Naive thymus-derived CD4-positive, alpha-beta T cell (primary cell): ENCODE measurements at regions of chr19 and their contacts with region 1.

Region 1: DNA sequence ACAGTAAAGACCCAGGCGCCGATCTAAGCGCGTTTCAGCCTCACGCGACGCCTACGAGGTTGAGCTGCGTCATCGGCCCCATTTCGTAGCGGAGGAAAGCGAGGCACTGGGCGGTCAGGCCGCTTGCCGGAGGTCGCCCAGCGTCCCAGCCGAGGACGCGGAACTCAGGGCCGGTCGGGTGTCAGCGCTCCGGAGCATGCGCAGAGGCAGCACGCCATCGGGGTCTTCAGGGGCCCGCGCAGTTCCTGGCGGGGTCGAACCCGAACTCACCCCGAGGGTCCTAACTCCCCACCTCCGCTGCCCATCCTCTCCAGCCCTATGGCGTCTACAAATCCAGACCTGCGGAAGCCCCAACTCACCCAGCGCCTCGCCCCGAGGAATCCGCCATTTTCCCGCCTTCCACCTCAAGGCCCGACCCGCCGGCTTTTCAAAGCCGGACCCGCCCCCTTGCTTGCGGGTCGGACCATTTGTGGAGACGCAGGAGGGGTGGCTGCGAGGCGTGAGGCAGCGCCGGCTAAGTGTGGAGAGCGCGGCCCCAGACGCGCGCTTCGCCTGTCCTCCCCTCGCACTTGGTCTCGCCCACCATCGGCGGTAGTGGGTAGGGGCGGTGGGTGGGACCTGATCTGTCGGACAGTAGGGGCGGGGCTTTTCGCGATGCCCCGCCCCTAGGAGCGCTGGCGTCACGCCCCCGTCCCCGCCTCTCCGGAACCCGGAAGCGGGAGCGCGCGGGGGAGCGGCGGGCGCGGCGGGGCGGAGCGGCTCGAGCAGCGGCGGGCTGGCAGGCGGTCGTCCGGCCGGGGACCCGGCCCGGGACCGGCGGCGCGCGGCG is at the starts of genes HAUS8 and MYO9B:
- DNase-seq: peak; percentile 96 to 100 (median 100)
- ATAC-seq: peak; percentile 98
- H3K4me3 ChIP-seq: peak within 1 kb of the TSS; percentile 94
- H3K4me3 Mint-ChIP-seq: peak within 1 kb of the TSS; percentile 96 to 100 (median 98)
- H3K27ac ChIP-seq: peak within 1 kb of the TSS; percentile 88
- H3K27ac Mint-ChIP-seq: peak within 1 kb of the TSS; percentile 86 to 99 (median 97)
- H3K4me1 ChIP-seq: peaks cover 28 to 32% of the 10 kb centered on the region in 2 donors
- H3K4me1 Mint-ChIP-seq: peaks cover 45 to 65% (median 55%) of the 10 kb centered on the region in 7 donors
- H3K27me3 ChIP-seq: no peaks in the 10 kb centered on the region
- H3K27me3 Mint-ChIP-seq: no peaks in the 10 kb centered on the region
- total RNA-seq, gene HAUS8: 16.7 to 31.5 (median 19.3) TPM
- total RNA-seq, gene MYO9B: 154 to 297 (median 205) TPM

Region 2: DNA sequence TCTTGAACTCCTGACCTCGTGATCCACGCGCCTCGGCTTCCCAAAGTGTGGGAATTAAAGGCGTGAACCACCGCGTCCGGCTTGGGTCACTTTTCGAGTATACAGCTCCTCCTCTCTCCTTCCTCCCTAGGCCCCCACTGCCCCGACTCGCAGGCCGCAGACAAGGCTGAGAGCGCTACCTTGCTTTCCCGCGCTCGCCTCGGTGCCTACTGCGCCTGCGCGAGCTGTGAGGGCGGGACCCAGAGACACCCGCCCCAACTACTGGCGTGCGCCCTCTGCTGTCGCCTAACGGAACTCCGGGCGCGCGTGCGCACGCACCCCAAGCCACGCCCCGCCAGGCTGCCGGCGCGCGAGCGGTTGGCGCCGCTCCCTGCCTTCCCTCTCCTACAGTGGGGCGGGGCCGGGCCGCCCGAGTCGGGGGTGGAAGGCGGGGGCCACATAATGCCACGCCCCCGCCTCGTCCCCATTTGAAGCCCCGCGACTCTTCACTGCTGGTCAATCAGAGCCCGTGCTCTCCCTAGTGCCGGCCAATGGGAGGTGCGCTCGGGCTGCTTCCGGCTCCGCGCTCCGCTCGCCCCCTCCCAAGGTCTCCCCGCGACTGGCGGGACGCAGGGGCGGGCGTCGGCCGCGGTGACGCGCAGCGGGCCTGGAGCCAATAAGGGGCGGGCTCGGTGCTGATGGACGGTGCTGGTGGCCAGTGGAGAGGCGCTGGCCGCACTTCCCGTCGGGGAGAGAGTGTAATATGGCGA is 963.9 kb before region 1 on chr19 and contains the start of gene RAB8A:
- CTCF ChIA-PET with region 1: no interaction called
- POLR2A ChIA-PET with region 1: no interaction called
- intact Hi-C with region 1: loop called in 1 of 2 experiments (anchors 5 kb)
- DNase-seq: peak; percentile 98 to 100 (median 99)
- ATAC-seq: peak; percentile 93
- H3K4me3 ChIP-seq: peak within 1 kb of the TSS; percentile 90
- H3K4me3 Mint-ChIP-seq: peak within 1 kb of the TSS; percentile 93 to 99 (median 98)
- H3K27ac ChIP-seq: peak within 1 kb of the TSS; percentile 94
- H3K27ac Mint-ChIP-seq: peak within 1 kb of the TSS; percentile 89 to 99 (median 97)
- H3K4me1 ChIP-seq: peaks cover 10 to 19% of the 10 kb centered on the region in 2 donors
- H3K4me1 Mint-ChIP-seq: peaks cover 23 to 49% (median 40%) of the 10 kb centered on the region in 7 donors
- H3K27me3 ChIP-seq: no peaks in the 10 kb centered on the region
- H3K27me3 Mint-ChIP-seq: no peaks in the 10 kb centered on the region
- total RNA-seq, gene RAB8A: 64.4 to 154 (median 74.5) TPM

Region 3: DNA sequence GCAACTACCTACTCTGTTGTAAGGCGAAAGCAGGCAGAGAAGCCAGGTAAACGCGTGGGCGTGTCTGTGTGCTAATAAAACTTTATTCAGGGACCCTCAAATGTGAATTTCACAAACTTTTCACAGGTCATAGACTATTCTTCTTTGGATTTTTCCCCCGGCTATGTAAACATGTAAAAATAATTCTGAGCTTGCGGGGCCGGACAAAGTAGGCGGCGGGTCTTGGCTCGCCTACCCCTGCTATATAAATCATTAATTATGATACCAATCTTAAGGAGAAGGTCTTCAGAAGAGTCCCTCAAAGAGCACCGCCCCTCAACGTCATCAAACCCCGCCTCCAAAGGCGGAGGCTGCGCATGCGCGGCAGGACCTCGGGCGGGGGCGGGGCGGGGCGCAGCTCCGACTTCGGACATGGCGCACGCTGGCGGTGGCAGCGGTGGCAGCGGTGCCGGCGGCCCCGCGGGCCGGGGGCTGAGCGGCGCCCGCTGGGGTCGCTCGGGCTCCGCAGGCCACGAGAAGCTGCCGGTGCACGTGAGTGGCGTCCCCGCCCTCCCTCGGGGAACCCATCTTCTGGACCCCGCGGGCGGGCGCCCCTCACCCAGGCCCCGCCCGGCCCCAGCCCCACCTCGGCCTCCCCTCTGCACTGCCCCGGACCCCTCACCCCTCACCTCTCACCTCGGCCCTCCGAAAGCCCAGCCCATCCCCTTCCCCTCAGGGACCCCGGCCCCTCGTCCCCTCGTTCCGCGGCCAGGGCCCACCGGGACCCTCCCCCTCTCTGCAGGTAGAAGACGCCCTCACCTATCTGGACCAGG is 246.0 kb before region 1 on chr19 and contains the start of gene SIN3B:
- CTCF ChIA-PET with region 1: no interaction called
- POLR2A ChIA-PET with region 1: no interaction called
- intact Hi-C with region 1: loop called in 1 of 2 experiments (anchors 1 kb)
- DNase-seq: peak; percentile 84 to 94 (median 89)
- ATAC-seq: peak; percentile 97
- H3K4me3 ChIP-seq: peak within 1 kb of the TSS; percentile 67
- H3K4me3 Mint-ChIP-seq: peak within 1 kb of the TSS; percentile 77 to 90 (median 86)
- H3K27ac ChIP-seq: peak within 1 kb of the TSS; percentile 93
- H3K27ac Mint-ChIP-seq: peak within 1 kb of the TSS; percentile 56 to 95 (median 89)
- H3K4me1 ChIP-seq: peaks cover 8% of the 10 kb centered on the region in 2 donors
- H3K4me1 Mint-ChIP-seq: peaks cover 16 to 54% (median 42%) of the 10 kb centered on the region in 7 donors
- H3K27me3 ChIP-seq: no peaks in the 10 kb centered on the region
- H3K27me3 Mint-ChIP-seq: peaks cover 11 to 27% (median 21%) of the 10 kb centered on the region in 5 donors
- total RNA-seq, gene SIN3B: 42.7 to 105 (median 102) TPM

Region 4: DNA sequence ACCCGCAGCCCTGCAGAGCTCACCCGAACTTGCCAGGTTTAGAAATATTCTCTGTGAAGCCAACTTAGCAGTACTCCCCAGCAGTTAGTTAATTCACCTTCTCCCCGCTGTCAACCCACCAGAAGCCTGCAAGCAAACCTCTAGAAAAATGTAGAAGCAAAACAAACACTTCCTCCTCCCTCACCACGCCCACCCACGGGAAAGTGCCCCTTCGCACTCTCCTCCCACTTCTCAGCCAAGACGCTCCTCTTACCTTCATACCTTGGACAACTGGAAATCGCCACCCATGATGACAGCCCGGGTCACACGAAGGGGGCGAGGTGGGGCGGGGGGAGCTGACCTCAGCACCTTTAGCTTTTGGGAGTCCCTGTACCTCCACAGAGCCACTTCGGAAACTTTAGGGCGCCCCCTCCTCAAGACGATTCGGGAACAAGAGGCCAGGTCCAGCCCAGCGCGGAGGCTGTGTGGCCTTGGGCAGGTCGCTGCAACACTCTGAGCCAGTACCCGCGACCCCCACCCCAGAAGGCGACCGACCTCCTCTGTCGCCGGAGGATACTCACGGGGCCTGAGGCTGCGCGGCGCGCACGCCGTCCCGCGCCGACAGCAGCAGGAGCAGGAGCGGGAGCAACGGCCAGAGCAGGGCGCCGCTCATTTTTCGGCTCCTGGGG is 49.1 kb before region 1 on chr19:
- CTCF ChIA-PET with region 1: no interaction called
- POLR2A ChIA-PET with region 1: no interaction called
- intact Hi-C with region 1: no loop called
- DNase-seq: peak in 5 of 9 donors; percentile 10 to 24 (median 18)
- ATAC-seq: peak; percentile 48
- H3K4me3 ChIP-seq: peak overlapping the region; percentile 48
- H3K4me3 Mint-ChIP-seq: peak overlapping the region; percentile 2 to 85 (median 76)
- H3K27ac ChIP-seq: no peak overlapping the region
- H3K27ac Mint-ChIP-seq: peak overlapping the region in 2 of 9 donors; percentile 32 to 53
- H3K4me1 ChIP-seq: peaks cover 0 to 7% of the 10 kb centered on the region in 2 donors
- H3K4me1 Mint-ChIP-seq: peaks cover 3 to 14% (median 8%) of the 10 kb centered on the region in 7 donors
- H3K27me3 ChIP-seq: peaks cover 0 to 11% of the 10 kb centered on the region in 2 donors
- H3K27me3 Mint-ChIP-seq: peaks cover 36 to 62% (median 45%) of the 10 kb centered on the region in 5 donors

Region 5: DNA sequence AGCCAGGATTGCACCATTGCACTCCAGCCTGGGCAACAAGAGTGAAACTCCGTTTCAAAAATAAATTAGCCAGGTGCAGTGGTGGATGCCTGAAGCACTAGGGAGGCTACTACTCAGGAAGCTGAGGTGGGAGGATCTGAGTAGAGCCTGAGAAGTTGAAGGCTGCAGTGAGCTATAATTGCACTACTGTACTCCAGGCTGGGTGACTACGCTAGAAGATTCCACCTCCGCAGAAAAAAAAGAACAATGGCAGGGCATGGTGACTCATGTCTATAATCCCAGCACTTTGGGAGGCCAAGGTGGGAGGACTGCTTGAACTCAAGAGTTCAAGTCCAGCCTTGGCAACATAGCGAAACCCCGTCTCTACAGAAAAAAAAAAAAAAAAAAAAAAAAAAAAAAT is 20.5 kb before region 1 on chr19:
- CTCF ChIA-PET with region 1: no interaction called
- POLR2A ChIA-PET with region 1: no interaction called
- intact Hi-C with region 1: no loop called
- DNase-seq: no peak
- ATAC-seq: no peak
- H3K4me3 ChIP-seq: no peak overlapping the region
- H3K4me3 Mint-ChIP-seq: no peak overlapping the region
- H3K27ac ChIP-seq: no peak overlapping the region
- H3K27ac Mint-ChIP-seq: no peak overlapping the region
- H3K4me1 ChIP-seq: no peaks in the 10 kb centered on the region
- H3K4me1 Mint-ChIP-seq: peaks cover 0 to 2% (median 0%) of the 10 kb centered on the region in 7 donors
- H3K27me3 ChIP-seq: no peaks in the 10 kb centered on the region
- H3K27me3 Mint-ChIP-seq: no peaks in the 10 kb centered on the region

Region 6: DNA sequence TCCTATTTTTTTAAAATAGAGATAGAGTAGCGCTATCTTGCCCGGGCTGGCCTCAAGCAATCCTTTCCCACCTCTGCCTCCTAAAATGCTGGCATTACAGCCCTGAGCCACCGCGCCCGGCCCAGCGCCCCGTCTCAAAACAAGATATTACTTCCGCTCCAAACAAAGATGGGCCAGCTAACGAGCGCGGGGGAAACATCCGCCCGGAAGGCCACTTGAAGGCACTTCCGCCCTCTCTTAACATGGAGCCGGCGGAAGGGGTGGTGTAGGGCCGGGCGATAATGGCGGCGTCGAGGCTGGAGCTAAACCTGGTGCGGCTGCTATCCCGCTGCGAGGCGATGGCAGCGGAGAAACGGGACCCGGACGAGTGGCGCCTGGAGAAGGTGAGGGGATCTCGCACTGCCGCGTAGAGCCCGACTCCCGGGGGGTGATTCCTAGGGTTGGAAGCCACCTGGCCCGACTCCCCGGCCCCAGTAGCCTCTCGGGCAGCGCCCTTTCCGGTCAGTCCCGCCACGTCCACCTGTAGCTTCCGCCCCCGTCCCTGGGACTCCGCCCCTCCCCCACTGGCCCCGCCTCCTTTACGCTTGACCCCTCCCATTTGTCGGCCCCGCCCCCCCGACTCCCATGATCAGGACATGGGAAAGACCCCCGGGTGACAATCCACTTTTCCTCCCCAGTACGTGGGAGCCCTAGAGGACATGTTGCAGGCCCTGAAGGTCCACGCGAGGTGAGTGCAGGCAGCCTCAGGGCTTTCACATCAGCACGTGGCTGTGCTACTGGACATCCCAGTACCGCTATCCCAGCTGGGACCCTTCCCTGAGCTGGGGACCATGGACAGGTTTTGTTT is 140.1 kb after region 1 on chr19 and contains the start of gene USE1:
- CTCF ChIA-PET with region 1: no interaction called
- POLR2A ChIA-PET with region 1: interaction called, 6 read pairs
- intact Hi-C with region 1: loop called in 1 of 2 experiments (anchors 1 kb)
- DNase-seq: peak; percentile 70 to 91 (median 89)
- ATAC-seq: peak; percentile 97
- H3K4me3 ChIP-seq: peak within 1 kb of the TSS; percentile 92
- H3K4me3 Mint-ChIP-seq: peak within 1 kb of the TSS; percentile 83 to 99 (median 90)
- H3K27ac ChIP-seq: peak within 1 kb of the TSS; percentile 89
- H3K27ac Mint-ChIP-seq: peak within 1 kb of the TSS; percentile 97 to 100 (median 99)
- H3K4me1 ChIP-seq: peaks cover 13 to 16% of the 10 kb centered on the region in 2 donors
- H3K4me1 Mint-ChIP-seq: peaks cover 0 to 16% (median 12%) of the 10 kb centered on the region in 7 donors
- H3K27me3 ChIP-seq: no peaks in the 10 kb centered on the region
- H3K27me3 Mint-ChIP-seq: no peaks in the 10 kb centered on the region
- total RNA-seq, gene USE1: 24.7 to 51.1 (median 30.5) TPM

Region 7: GRCh38 chr19:17282488-17283255 is 207.4 kb after region 1 on chr19:
- CTCF ChIA-PET with region 1: interaction called, 6 read pairs
- POLR2A ChIA-PET with region 1: interaction called, 5 read pairs
- intact Hi-C with region 1: loop called in 1 of 2 experiments (anchors 2 kb)
- DNase-seq: peak; percentile 58 to 86 (median 70)
- ATAC-seq: peak; percentile 97
- H3K4me3 ChIP-seq: peak overlapping the region; percentile 62
- H3K4me3 Mint-ChIP-seq: peak overlapping the region; percentile 75 to 90 (median 81)
- H3K27ac ChIP-seq: no peak overlapping the region
- H3K27ac Mint-ChIP-seq: peak overlapping the region in 3 of 9 donors; percentile 56 to 72 (median 62)
- H3K4me1 ChIP-seq: peaks cover 0 to 8% of the 10 kb centered on the region in 2 donors
- H3K4me1 Mint-ChIP-seq: peaks cover 0 to 9% (median 3%) of the 10 kb centered on the region in 7 donors
- H3K27me3 ChIP-seq: no peaks in the 10 kb centered on the region
- H3K27me3 Mint-ChIP-seq: peaks cover 0 to 4% (median 0%) of the 10 kb centered on the region in 5 donors

Region 8: DNA sequence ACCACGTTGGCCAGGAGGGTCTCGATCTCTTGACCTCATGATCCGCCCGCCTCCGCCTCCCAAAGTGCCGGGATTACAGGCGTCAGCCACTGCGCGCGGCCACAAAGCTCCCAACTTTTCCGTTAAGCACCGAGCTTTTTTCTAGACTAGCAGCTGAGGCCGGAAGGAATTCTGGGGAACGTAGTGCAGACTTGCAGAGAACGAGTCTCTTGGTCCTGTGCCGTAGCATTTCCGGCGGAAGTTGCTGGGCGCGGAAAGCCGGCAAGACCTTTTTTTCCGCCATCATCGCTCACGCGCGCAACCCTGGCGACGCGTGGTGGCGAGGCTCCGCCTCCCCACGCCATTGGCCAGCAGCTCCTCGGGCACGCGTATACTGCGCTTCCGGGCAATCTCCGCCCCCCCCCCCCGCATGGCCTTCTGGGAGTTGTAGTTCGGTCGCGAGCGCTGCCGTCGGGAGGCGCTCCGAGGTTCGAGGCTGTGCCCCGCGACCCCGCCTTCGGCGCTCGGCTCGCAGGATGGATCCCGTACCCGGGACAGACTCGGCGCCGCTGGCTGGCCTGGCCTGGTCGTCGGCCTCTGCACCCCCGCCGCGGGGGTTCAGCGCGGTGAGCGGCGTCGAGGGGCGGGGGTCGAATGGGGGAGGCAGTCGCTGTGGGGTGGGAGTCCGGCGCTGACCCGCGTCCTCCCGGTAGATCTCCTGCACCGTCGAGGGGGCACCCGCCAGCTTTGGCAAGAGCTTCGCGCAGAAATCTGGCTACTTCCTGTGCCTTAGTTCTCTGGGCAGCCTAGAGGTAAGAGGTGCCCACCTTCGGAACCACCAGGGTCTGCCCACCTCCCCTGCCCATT is 344.6 kb after region 1 on chr19 and contains the start of gene MVB12A:
- CTCF ChIA-PET with region 1: no interaction called
- POLR2A ChIA-PET with region 1: no interaction called
- intact Hi-C with region 1: loop called in 1 of 2 experiments (anchors 1 kb)
- DNase-seq: peak; percentile 85 to 98 (median 96)
- ATAC-seq: peak; percentile 99
- H3K4me3 ChIP-seq: peak within 1 kb of the TSS; percentile 79
- H3K4me3 Mint-ChIP-seq: peak within 1 kb of the TSS; percentile 87 to 95 (median 91)
- H3K27ac ChIP-seq: peak within 1 kb of the TSS; percentile 70
- H3K27ac Mint-ChIP-seq: peak within 1 kb of the TSS; percentile 73 to 93 (median 89)
- H3K4me1 ChIP-seq: peaks cover 12 to 15% of the 10 kb centered on the region in 2 donors
- H3K4me1 Mint-ChIP-seq: peaks cover 4 to 28% (median 19%) of the 10 kb centered on the region in 7 donors
- H3K27me3 ChIP-seq: no peaks in the 10 kb centered on the region
- H3K27me3 Mint-ChIP-seq: no peaks in the 10 kb centered on the region
- total RNA-seq, gene MVB12A: 19.5 to 45.1 (median 33.3) TPM